B cell (primary cell): ENCODE measurements at regions of chr9 and their contacts with region 1.

Region 1: DNA sequence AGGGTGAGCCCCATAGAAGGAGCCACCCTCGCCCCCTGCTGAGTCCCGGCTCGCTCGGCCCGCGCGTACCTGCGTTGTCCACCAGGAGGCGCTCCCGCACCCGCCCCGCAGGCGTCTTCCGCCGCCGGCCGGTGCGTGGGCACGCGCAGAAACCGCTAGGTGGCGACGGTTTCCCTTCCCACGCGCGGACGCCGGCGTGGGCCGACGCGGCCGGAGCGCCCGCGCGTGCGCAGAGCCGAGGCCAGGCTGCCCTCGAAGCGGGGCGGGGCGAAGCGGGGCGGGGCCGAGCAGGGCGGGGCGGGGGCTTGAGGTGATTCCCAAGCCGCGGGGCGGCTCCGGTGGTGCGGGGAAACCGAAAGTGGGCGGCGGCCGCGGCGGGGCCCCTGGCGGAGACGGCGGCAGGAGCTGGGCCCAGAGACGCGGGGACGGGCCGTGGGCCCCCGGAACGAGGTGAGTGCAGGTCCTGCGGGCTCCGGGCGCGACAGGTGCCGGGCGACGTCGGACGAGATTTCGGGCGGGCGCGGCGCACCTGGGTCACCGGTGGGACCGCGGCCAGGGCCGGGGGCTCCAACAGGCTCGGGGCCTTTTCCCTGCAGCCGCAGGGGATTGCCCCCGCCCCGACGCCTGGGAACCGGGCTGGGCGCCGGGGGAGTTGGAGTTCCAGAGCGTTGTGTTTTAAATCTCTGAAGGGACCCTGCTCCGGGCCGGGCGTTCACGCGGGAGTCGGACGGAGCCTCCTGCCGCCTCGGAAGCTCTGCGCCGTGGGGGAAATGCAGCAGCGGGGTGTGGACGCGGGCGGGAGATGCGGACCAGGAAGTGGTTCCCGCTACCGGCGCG is at the start of gene TDRD7:
- DNase-seq: peak; percentile 96
- ATAC-seq: peak; percentile 91
- H3K4me3 ChIP-seq: peak within 1 kb of the TSS; percentile 57 to 92 (median 85)
- H3K4me3 Mint-ChIP-seq: peak within 1 kb of the TSS; percentile 77
- H3K27ac ChIP-seq: peak within 1 kb of the TSS; percentile 61 to 79
- H3K27ac Mint-ChIP-seq: peak within 1 kb of the TSS; percentile 82
- H3K4me1 ChIP-seq: peaks cover 18% of the 10 kb centered on the region in 2 donors
- H3K4me1 Mint-ChIP-seq: peaks cover 34% of the 10 kb centered on the region
- H3K27me3 ChIP-seq: peaks cover 0 to 3% (median 0%) of the 10 kb centered on the region in 4 experiments
- H3K27me3 Mint-ChIP-seq: peaks cover 10% of the 10 kb centered on the region
- CTCF ChIP-seq: peak; percentile 100
- total RNA-seq, gene TDRD7: 19.7 and 20.6 TPM in 2 replicates

Region 2: GRCh38 chr9:95875305-95876137 is 1536.5 kb before region 1 on chr9 and contains the start of gene ERCC6L2:
- CTCF ChIA-PET with region 1: no interaction called
- POLR2A ChIA-PET with region 1: no interaction called
- intact Hi-C with region 1: loop called (anchors 10 kb)
- DNase-seq: peak; percentile 96
- ATAC-seq: peak; percentile 89
- H3K4me3 ChIP-seq: peak within 1 kb of the TSS in 2 of 5 experiments; percentile 76 to 82
- H3K4me3 Mint-ChIP-seq: no peak within 1 kb of the TSS
- H3K27ac ChIP-seq: no peak within 1 kb of the TSS
- H3K27ac Mint-ChIP-seq: no peak within 1 kb of the TSS
- H3K4me1 ChIP-seq: peaks cover 8 to 11% of the 10 kb centered on the region in 2 donors
- H3K4me1 Mint-ChIP-seq: peaks cover 23% of the 10 kb centered on the region
- H3K27me3 ChIP-seq: no peaks in the 10 kb centered on the region
- H3K27me3 Mint-ChIP-seq: no peaks in the 10 kb centered on the region
- CTCF ChIP-seq: no peak
- total RNA-seq, gene ERCC6L2: 52.0 and 54.4 TPM in 2 replicates

Region 3: DNA sequence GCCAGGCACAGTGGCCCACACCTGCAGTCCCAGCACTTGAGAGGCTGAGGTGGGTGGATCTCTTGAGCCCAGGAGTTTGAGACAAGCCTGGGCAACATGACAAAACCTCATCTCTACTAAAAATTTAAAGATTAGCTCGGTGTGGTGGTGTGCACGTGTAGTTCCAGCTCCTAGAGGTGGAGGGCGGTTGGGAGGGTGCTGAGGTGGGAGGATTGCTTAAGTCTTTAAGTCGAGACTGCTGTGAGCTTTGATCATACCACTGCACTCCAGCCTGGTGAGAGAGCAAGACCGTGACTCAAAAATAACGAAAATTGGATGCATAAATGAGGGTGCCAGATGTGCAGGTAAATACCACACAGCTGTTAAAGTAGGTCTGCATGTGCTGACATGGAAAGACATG is 39.4 kb before region 1 on chr9:
- CTCF ChIA-PET with region 1: no interaction called
- POLR2A ChIA-PET with region 1: no interaction called
- intact Hi-C with region 1: no loop called
- DNase-seq: no peak
- ATAC-seq: no peak
- H3K4me3 ChIP-seq: no peak overlapping the region
- H3K4me3 Mint-ChIP-seq: no peak overlapping the region
- H3K27ac ChIP-seq: no peak overlapping the region
- H3K27ac Mint-ChIP-seq: no peak overlapping the region
- H3K4me1 ChIP-seq: no peaks in the 10 kb centered on the region
- H3K4me1 Mint-ChIP-seq: no peaks in the 10 kb centered on the region
- H3K27me3 ChIP-seq: no peaks in the 10 kb centered on the region
- H3K27me3 Mint-ChIP-seq: no peaks in the 10 kb centered on the region
- CTCF ChIP-seq: no peak

Region 4: GRCh38 chr9:97386733-97387503 is 25.1 kb before region 1 on chr9:
- CTCF ChIA-PET with region 1: interaction called, 3 read pairs
- POLR2A ChIA-PET with region 1: no interaction called
- intact Hi-C with region 1: loop called (anchors 1 kb)
- DNase-seq: peak; percentile 74
- ATAC-seq: peak; percentile 77
- H3K4me3 ChIP-seq: peak overlapping the region in 1 of 5 experiments; percentile 6
- H3K4me3 Mint-ChIP-seq: no peak overlapping the region
- H3K27ac ChIP-seq: no peak overlapping the region
- H3K27ac Mint-ChIP-seq: no peak overlapping the region
- H3K4me1 ChIP-seq: peaks cover 15% of the 10 kb centered on the region in 2 donors
- H3K4me1 Mint-ChIP-seq: peaks cover 18% of the 10 kb centered on the region
- H3K27me3 ChIP-seq: peaks cover 0 to 28% (median 0%) of the 10 kb centered on the region in 4 experiments
- H3K27me3 Mint-ChIP-seq: peaks cover 10% of the 10 kb centered on the region
- CTCF ChIP-seq: peak; percentile 99

Region 5: DNA sequence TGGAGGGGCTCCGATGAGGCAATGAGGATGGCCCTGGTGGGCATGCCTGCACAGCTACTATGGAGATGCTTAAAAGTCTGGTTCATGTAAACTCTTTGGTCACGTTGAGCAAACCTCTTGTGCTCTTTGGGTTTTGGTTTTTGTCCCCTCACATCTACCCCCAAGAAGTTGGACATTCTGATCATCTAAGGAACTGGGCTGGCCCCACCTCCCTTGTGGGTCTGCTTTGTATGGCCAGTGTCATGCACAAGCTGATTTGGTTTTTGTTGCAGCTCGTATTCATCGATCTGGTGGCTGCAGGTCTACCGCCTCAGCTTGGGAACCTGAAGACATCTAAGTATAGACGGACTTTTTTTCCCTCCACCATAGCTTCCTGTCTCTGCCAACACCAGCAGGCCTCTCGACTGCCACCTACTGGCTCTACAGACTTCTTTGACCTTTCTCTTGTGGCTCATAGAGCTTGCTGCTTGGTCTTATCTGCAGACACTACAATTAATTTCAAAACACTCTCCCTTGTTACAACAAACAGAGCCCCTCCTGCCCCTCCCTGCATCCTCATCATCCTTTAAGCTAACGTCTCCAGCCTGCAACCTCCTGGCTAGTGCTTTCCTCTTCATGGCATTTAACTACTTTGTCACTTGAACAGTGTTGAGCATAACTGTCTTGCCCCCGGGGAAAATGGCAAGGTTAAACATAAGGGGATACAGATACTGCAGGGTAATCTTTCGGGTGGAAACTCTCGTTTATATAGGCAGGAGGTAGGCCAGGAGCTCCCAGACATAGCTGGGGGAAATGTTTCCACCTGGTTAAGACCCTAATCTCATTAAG is 186.7 kb after region 1 on chr9:
- CTCF ChIA-PET with region 1: interaction called, 13 read pairs
- POLR2A ChIA-PET with region 1: no interaction called
- intact Hi-C with region 1: loop called (anchors 1 kb)
- DNase-seq: peak; percentile 77
- ATAC-seq: peak; percentile 85
- H3K4me3 ChIP-seq: peak overlapping the region in 1 of 5 experiments; percentile 23
- H3K4me3 Mint-ChIP-seq: peak overlapping the region; percentile 51
- H3K27ac ChIP-seq: no peak overlapping the region
- H3K27ac Mint-ChIP-seq: no peak overlapping the region
- H3K4me1 ChIP-seq: peaks cover 0 to 4% of the 10 kb centered on the region in 2 donors
- H3K4me1 Mint-ChIP-seq: peaks cover 6% of the 10 kb centered on the region
- H3K27me3 ChIP-seq: no peaks in the 10 kb centered on the region
- H3K27me3 Mint-ChIP-seq: no peaks in the 10 kb centered on the region
- CTCF ChIP-seq: peak; percentile 87

Region 6: DNA sequence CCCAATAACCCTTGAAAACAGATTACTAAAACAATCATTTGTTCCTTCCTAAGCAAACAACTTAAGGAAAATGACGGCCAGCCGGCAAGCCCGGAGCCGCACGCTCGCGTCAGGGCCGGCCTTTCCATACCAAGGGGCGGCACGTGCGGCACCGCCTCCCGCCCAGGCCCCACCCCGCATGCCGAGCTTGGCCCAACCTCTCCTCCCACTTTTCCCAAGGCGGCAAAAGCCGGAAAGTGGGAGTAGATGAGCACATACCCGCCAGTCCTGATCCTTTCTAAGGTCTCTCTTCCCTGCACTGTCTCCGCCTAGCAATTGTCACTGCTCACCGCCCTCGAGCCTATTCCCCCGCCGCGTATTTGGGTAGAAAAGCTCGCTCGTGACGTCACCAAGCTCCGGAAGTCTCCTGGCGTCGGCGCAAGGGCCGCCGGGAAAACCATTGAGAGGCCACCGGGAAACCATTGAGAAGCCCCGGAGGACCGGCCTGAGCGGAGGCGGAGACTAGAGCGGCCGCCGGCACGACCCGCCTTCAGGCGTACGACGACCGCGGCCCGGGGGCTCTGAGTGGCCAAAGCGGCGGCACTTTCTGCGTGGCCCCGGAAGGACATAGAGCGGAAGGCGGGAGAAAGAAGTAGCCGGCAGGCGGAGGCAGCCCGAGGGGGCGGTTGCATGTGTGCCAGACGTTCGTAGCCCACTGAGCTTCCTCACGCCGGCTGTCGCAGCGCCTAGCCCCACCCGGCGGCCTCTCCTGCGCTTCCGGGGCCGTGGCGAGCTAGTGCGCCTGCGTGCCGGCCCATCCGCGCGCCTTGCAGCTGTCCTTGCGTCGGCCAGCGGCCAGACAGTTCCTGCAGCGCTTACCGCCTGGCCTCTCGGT is 221.2 kb after region 1 on chr9 and contains the starts of genes NCBP1 and TSTD2:
- CTCF ChIA-PET with region 1: interaction called, 7 read pairs
- POLR2A ChIA-PET with region 1: interaction called, 10 read pairs
- intact Hi-C with region 1: loop called (anchors 1 kb)
- DNase-seq: peak; percentile 99
- ATAC-seq: peak; percentile 91
- H3K4me3 ChIP-seq: peak within 1 kb of the TSS; percentile 94 to 99 (median 95)
- H3K4me3 Mint-ChIP-seq: peak within 1 kb of the TSS; percentile 97
- H3K27ac ChIP-seq: peak within 1 kb of the TSS; percentile 92 to 93
- H3K27ac Mint-ChIP-seq: peak within 1 kb of the TSS; percentile 98
- H3K4me1 ChIP-seq: peaks cover 26 to 35% of the 10 kb centered on the region in 2 donors
- H3K4me1 Mint-ChIP-seq: peaks cover 58% of the 10 kb centered on the region
- H3K27me3 ChIP-seq: no peaks in the 10 kb centered on the region
- H3K27me3 Mint-ChIP-seq: no peaks in the 10 kb centered on the region
- CTCF ChIP-seq: no peak
- total RNA-seq, gene NCBP1: 38.0 and 40.7 TPM in 2 replicates
- total RNA-seq, gene TSTD2: 29.2 and 31.1 TPM in 2 replicates

Region 7: DNA sequence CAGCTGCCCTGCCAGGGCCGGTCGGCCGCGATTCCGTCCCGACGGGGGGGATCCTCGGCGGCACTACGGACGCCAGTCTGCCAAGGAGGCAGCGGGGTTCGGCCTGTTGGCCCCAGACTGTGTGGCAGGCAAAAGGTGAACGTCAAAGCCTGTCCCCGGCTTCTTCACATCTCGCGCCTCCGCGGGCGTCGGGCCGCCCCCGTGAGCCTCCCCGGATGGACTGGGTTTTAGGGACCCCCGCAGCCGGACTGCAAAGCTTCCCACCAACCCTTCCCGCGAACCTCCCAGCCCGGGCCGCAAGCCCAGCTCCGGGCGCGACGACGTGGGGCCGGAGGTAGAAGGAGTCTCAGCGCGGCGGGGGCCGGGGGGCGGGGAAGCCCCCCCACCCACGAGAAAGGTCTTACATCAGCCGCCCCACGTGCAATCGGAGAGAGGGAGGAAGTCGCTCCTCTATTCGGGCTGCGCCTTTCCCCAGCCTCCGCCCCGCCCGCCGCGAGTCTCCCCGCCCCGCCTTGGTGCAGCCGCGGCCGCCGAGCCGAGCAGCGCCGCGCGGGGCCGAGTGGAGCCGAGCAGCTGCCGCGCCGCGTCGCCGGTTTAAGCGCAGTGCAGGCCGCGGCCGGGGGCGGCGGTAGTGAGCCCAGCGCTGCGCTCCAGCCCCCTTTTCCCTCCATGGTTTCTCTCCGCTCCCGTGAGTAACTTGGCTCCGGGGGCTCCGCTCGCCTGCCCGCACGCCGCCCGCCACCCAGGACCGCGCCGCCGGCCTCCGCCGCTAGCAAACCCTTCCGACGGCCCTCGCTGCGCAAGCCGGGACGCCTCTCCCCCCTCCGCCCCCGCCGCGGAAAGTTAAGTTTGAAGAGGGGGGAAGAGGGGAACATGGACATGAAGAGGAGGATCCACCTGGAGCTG is 570.9 kb after region 1 on chr9 and contains the start of gene ANP32B:
- CTCF ChIA-PET with region 1: no interaction called
- POLR2A ChIA-PET with region 1: no interaction called
- intact Hi-C with region 1: loop called (anchors 10 kb)
- DNase-seq: peak; percentile 96
- ATAC-seq: peak; percentile 79
- H3K4me3 ChIP-seq: peak within 1 kb of the TSS; percentile 25 to 97 (median 84)
- H3K4me3 Mint-ChIP-seq: peak within 1 kb of the TSS; percentile 92
- H3K27ac ChIP-seq: peak within 1 kb of the TSS; percentile 90 to 93
- H3K27ac Mint-ChIP-seq: peak within 1 kb of the TSS; percentile 98
- H3K4me1 ChIP-seq: peaks cover 28 to 34% of the 10 kb centered on the region in 2 donors
- H3K4me1 Mint-ChIP-seq: peaks cover 29% of the 10 kb centered on the region
- H3K27me3 ChIP-seq: no peaks in the 10 kb centered on the region
- H3K27me3 Mint-ChIP-seq: no peaks in the 10 kb centered on the region
- CTCF ChIP-seq: peak; percentile 96
- total RNA-seq, gene ANP32B: 138 and 150 TPM in 2 replicates